ENCODE measurements at regions of chr4 and their contacts with region 1.

Region 1: GRCh38 chr4:169996379-169997240 is 29.6 kb downstream of the MFAP3L start:
- DNase-seq: no peak
- ATAC-seq: peak; percentile 51
- H3K4me3 ChIP-seq: no peak overlapping the region
- H3K27ac ChIP-seq: no peak overlapping the region
- H3K4me1 ChIP-seq: no peaks in the 10 kb centered on the region
- H3K27me3 ChIP-seq: no peaks in the 10 kb centered on the region
- CTCF ChIP-seq: no peak
- EP300 ChIP-seq: no peak
- POLR2A ChIP-seq: no peak
- RAD21 ChIP-seq: no peak

Region 2: DNA sequence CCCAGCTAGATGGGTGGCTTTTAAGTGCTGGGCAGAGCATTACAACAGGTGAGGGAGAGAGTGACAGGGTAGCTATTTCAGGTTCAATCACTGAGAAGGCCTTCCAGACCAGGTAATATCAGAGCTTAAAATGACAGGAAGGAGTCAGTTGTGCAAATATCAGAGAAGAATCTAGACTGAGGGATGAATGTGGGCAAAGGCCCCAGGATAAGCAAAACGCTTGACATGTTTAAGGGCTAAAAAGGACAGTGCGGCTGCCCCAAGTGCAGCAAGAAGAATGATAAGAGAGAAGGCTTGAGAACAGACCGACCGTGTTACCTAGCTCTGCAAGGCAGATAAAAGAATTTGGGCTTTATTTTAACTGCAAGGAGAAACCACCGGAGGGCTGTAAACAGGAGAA is 74.6 kb after region 1 on chr4:
- CTCF ChIA-PET with region 1: no interaction called
- POLR2A ChIA-PET with region 1: no interaction called
- in situ Hi-C with region 1: no loop called
- intact Hi-C with region 1: no loop called
- DNase-seq: no peak
- ATAC-seq: no peak
- H3K4me3 ChIP-seq: no peak overlapping the region
- H3K27ac ChIP-seq: no peak overlapping the region
- H3K4me1 ChIP-seq: no peaks in the 10 kb centered on the region
- H3K27me3 ChIP-seq: no peaks in the 10 kb centered on the region
- CTCF ChIP-seq: no peak
- EP300 ChIP-seq: no peak
- POLR2A ChIP-seq: no peak
- RAD21 ChIP-seq: no peak

Region 3: DNA sequence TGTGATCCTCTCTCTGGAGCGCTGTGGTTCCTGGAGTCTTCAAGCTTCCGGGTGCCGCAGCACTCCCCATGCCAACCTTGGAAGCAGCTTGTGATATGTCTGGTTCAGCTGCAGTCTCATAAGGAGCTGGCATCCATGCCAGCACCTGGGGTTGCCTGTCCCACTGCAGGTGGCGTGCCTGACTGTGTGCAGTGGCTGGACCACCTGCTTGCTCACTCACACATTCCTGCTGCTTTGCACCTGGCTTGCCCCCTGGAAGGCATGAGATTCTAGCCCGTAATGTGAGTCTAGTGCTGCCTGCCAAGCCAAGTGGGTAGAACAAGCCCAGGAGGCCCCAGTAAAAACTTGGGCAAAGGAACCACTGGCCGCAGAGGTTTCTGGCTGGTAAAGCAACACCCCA is 780.4 kb after region 1 on chr4:
- CTCF ChIA-PET with region 1: no interaction called
- POLR2A ChIA-PET with region 1: no interaction called
- in situ Hi-C with region 1: no loop called
- intact Hi-C with region 1: loop called (anchors 5 kb)
- DNase-seq: no peak
- ATAC-seq: no peak
- H3K4me3 ChIP-seq: no peak overlapping the region
- H3K27ac ChIP-seq: no peak overlapping the region
- H3K4me1 ChIP-seq: no peaks in the 10 kb centered on the region
- H3K27me3 ChIP-seq: no peaks in the 10 kb centered on the region; a peak in 1 of 5 replicates
- CTCF ChIP-seq: no peak
- EP300 ChIP-seq: no peak
- POLR2A ChIP-seq: no peak
- RAD21 ChIP-seq: no peak

Measured in HepG2 (cell line).